Activated CD4-positive, alpha-beta memory T cell treated with anti-CD3 and anti-CD28 coated beads for 36 hours (primary cell): ENCODE measurements at regions of chr13 and their contacts with region 1.

Region 1: GRCh38 chr13:37058910-37059847 is at the start of gene SUPT20H:
- DNase-seq: peak; percentile 96
- H3K4me3 Mint-ChIP-seq: peak within 1 kb of the TSS; percentile 89
- H3K27ac Mint-ChIP-seq: peak within 1 kb of the TSS; percentile 94
- H3K4me1 Mint-ChIP-seq: peaks cover 30% of the 10 kb centered on the region
- H3K27me3 Mint-ChIP-seq: no peaks in the 10 kb centered on the region
- total RNA-seq, gene SUPT20H: 56.8 TPM

Region 2: DNA sequence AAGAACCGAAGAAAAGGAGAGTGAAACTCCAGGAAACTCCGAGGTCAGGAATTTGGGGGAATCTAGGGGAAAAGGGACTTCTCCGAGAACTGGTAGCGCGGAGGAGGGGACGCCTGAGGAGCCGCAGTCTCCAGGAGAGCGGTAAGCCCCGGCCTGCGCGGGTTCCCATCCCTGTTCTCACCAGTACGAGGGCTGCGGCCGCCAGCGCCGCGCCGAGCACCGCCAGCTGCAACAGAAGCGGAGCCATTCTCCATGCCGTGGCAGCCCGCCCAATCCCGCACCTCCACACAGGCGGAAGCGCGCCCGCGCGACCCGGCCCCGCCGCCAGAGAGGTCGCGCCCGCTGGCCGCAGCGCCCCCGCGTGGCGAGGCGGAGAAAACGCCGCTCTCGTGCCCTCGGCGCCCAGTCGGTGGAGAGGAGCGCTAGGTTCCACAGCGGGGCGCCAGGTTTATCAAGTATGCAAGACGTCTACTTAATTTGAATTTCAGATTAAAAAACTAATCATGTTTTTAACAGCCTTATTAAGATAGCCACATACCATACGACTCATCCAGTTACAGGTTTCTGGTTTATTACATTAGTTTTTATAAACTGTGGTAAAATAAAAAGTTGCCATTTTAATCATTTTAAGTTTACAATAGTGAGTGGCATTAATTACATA is 60.0 kb before region 1 on chr13 and contains the start of gene ALG5:
- CTCF ChIA-PET with region 1: no interaction called
- POLR2A ChIA-PET with region 1: interaction called, 4 read pairs
- intact Hi-C with region 1: loop called (anchors 1 kb)
- DNase-seq: peak; percentile 94
- H3K4me3 Mint-ChIP-seq: peak within 1 kb of the TSS; percentile 98
- H3K27ac Mint-ChIP-seq: peak within 1 kb of the TSS; percentile 99
- H3K4me1 Mint-ChIP-seq: peaks cover 36% of the 10 kb centered on the region
- H3K27me3 Mint-ChIP-seq: no peaks in the 10 kb centered on the region
- total RNA-seq, gene ALG5: 25.9 to 27.6 TPM

Region 3: GRCh38 chr13:38349390-38350113 is 1290.4 kb after region 1 on chr13 and contains the start of gene UFM1:
- CTCF ChIA-PET with region 1: no interaction called
- POLR2A ChIA-PET with region 1: no interaction called
- intact Hi-C with region 1: loop called (anchors 2 kb)
- DNase-seq: peak; percentile 91
- H3K4me3 Mint-ChIP-seq: peak within 1 kb of the TSS; percentile 100
- H3K27ac Mint-ChIP-seq: peak within 1 kb of the TSS; percentile 99
- H3K4me1 Mint-ChIP-seq: peaks cover 35% of the 10 kb centered on the region
- H3K27me3 Mint-ChIP-seq: no peaks in the 10 kb centered on the region
- total RNA-seq, gene UFM1: 45.9 to 46.6 TPM